ENCODE measurements at regions of chr2 and their contacts with region 1.

Region 1: GRCh38 chr2:230913406-230914143 is 11.5 kb downstream of the GPR55 start:
- DNase-seq: peak; percentile 85
- H3K4me3 ChIP-seq: no peak overlapping the region
- H3K27ac ChIP-seq: no peak overlapping the region
- H3K4me1 ChIP-seq: no peaks in the 10 kb centered on the region; a peak in 1 of 4 replicates
- H3K27me3 ChIP-seq: peaks cover 12% of the 10 kb centered on the region; the same call in 1 of the 2 replicates
- CTCF ChIP-seq: peak; percentile 58
- EP300 ChIP-seq: no peak
- RAD21 ChIP-seq: peak; percentile 89

Region 2: GRCh38 chr2:230751062-230751461 is 162.5 kb before region 1 on chr2:
- CTCF ChIA-PET with region 1: no interaction called
- POLR2A ChIA-PET with region 1: no interaction called
- DNase-seq: no peak
- H3K4me3 ChIP-seq: no peak overlapping the region
- H3K27ac ChIP-seq: no peak overlapping the region
- H3K4me1 ChIP-seq: no peaks in the 10 kb centered on the region; a peak in 1 of 4 replicates
- H3K27me3 ChIP-seq: no peaks in the 10 kb centered on the region
- CTCF ChIP-seq: no peak
- EP300 ChIP-seq: no peak
- RAD21 ChIP-seq: no peak

Region 3: DNA sequence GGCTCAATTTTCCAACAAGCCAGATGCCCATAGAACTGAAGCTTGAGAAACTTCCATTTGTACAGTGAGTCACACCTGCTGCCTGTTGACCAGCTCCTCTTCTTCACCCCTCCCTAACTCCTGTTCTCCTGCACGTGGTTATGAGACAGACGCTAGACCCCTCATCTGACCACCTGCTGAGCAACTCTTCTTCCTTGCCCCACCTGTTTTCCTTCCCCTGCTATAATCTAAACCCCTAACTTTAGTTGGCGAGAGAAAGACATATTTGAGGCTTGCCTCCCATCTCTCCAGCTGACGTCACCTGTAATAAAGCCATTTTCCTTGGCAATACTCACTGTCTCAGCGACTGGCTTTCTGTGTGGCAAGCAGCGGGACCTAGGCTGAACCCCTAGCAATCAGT is 71.1 kb before region 1 on chr2:
- CTCF ChIA-PET with region 1: interaction called, 53 read pairs
- POLR2A ChIA-PET with region 1: no interaction called
- DNase-seq: no peak
- H3K4me3 ChIP-seq: no peak overlapping the region
- H3K27ac ChIP-seq: no peak overlapping the region
- H3K4me1 ChIP-seq: no peaks in the 10 kb centered on the region
- H3K27me3 ChIP-seq: no peaks in the 10 kb centered on the region; the same call in 1 of the 2 replicates
- CTCF ChIP-seq: no peak
- EP300 ChIP-seq: no peak
- RAD21 ChIP-seq: no peak

Region 4: DNA sequence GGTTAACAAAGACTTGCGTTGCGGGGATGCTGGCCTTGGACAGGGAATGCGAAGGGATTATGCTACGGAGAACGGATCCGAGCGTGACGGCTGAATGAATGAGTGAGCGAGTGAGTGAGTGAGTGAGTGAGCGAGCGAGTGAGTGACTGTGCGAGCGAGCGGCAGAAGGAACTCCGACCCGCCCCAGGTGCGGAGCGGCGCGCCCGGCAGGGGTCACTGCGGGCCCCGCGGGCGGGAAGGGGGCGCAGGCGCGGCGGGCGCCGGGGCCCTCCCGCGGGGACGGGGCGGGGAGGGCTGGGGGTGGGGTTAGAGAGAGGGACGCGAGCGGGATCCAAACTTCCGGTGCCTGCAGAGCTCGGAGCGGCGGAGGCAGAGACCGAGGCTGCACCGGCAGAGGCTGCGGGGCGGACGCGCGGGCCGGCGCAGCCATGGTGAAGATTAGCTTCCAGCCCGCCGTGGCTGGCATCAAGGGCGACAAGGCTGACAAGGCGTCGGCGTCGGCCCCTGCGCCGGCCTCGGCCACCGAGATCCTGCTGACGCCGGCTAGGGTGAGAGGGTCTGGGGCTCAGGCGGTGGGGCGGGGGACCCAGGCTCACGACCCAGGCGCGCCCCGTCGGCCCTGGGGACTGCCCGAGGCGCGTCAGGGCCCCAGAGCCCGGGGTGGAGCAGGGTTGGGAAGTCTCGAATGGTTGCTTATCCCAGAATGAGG is 48.8 kb before region 1 on chr2 and contains the start of gene ITM2C:
- CTCF ChIA-PET with region 1: interaction called, 58 read pairs
- POLR2A ChIA-PET with region 1: no interaction called
- DNase-seq: peak; percentile 98
- H3K4me3 ChIP-seq: peak within 1 kb of the TSS; percentile 89 to 95
- H3K27ac ChIP-seq: peak within 1 kb of the TSS in 1 of 2 experiments; percentile 86; a peak in 2 of 4 replicates
- H3K4me1 ChIP-seq: peaks cover 27 to 41% of the 10 kb centered on the region in 2 experiments
- H3K27me3 ChIP-seq: no peaks in the 10 kb centered on the region; the same call in 1 of the 2 replicates
- CTCF ChIP-seq: peak; percentile 54
- EP300 ChIP-seq: no peak
- RAD21 ChIP-seq: peak; percentile 39; the same call in 1 of the 2 replicates
- polyA plus RNA-seq, gene ITM2C: 288 and 290 TPM in 2 replicates

Region 5: GRCh38 chr2:230895536-230896345 is 17.8 kb before region 1 on chr2:
- CTCF ChIA-PET with region 1: interaction called, 31 read pairs
- POLR2A ChIA-PET with region 1: no interaction called
- DNase-seq: no peak
- H3K4me3 ChIP-seq: no peak overlapping the region
- H3K27ac ChIP-seq: no peak overlapping the region
- H3K4me1 ChIP-seq: no peaks in the 10 kb centered on the region; a peak in 1 of 4 replicates
- H3K27me3 ChIP-seq: peaks cover 23% of the 10 kb centered on the region; the same call in 1 of the 2 replicates
- CTCF ChIP-seq: no peak
- EP300 ChIP-seq: no peak
- RAD21 ChIP-seq: no peak

Region 6: DNA sequence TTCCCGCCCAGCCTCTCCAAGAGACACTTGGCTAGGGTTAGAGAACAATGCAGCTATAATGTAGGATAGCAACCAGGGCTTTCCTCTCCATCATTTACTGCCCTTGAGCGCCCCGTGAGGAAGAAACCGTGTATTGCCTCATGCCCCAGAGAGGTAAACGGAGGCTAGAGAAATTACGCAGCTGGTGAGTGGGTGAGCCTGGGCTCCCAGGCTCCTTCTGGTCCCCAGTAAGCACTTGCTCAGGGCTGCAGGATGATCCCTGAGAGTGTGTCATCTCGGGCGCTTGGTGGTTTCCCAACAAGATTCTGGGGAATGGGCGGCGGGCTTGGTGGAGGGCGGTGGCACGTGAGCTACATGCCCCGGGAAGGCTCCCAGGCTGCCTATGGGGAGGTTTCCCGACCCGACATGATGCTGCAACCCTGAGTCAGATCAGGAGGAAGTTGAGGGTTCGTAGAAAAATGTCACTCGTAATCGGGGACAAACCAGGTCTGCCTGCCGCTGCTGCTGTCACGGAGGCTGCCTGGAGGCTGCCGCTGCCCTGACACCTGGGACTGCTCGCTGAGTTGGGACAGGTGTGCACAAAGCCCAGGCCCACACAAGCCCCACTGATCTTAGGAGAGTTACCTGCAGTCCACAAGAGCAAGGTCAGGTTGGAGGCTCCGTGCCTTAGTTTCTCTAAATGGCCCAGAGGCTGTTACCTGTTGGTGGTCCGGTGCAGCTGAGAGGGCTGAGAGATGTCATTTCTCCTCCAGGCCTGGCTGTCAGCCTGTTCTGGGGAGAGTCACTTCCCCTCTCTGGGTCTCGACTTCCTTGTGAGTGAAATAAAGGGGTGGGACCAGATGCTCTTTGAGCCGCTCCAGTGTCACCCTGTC is 11.1 kb after region 1 on chr2 and contains the start of gene GPR55:
- CTCF ChIA-PET with region 1: interaction called, 14 read pairs
- POLR2A ChIA-PET with region 1: no interaction called
- DNase-seq: no peak
- H3K4me3 ChIP-seq: no peak within 1 kb of the TSS
- H3K27ac ChIP-seq: no peak within 1 kb of the TSS
- H3K4me1 ChIP-seq: no peaks in the 10 kb centered on the region
- H3K27me3 ChIP-seq: no peaks in the 10 kb centered on the region; the same call in none of the 2 replicates
- CTCF ChIP-seq: 0 out of 2 replicates have a peak, but pooled peaks have one; percentile 12
- EP300 ChIP-seq: no peak
- RAD21 ChIP-seq: 0 out of 2 replicates have a peak, but pooled peaks have one; percentile 14
- polyA plus RNA-seq, gene GPR55: not detected in 2 replicates

Region 7: GRCh38 chr2:231007286-231008007 is 93.9 kb after region 1 on chr2:
- CTCF ChIA-PET with region 1: no interaction called
- POLR2A ChIA-PET with region 1: no interaction called
- DNase-seq: no peak
- H3K4me3 ChIP-seq: no peak overlapping the region
- H3K27ac ChIP-seq: no peak overlapping the region
- H3K4me1 ChIP-seq: no peaks in the 10 kb centered on the region
- H3K27me3 ChIP-seq: peaks cover 14% of the 10 kb centered on the region; the same call in 1 of the 2 replicates
- CTCF ChIP-seq: no peak
- EP300 ChIP-seq: no peak
- RAD21 ChIP-seq: no peak

Measured in SK-N-SH (cell line).